Body of pancreas (tissue), 4 donors: ENCODE measurements at regions of chr6 and their contacts with region 1.

Region 1: GRCh38 chr6:152642989-152643388 is 5.8 kb upstream of the SYNE1 start:
- DNase-seq: peak; percentile 48 to 67 (median 63)
- ATAC-seq: peak; percentile 59
- H3K4me3 ChIP-seq: no peak overlapping the region
- H3K27ac ChIP-seq: no peak overlapping the region
- H3K4me1 ChIP-seq: no peaks in the 10 kb centered on the region
- H3K27me3 ChIP-seq: no peaks in the 10 kb centered on the region
- CTCF ChIP-seq: peak; percentile 17 to 63 (median 46)
- POLR2A ChIP-seq: no peak

Region 2: DNA sequence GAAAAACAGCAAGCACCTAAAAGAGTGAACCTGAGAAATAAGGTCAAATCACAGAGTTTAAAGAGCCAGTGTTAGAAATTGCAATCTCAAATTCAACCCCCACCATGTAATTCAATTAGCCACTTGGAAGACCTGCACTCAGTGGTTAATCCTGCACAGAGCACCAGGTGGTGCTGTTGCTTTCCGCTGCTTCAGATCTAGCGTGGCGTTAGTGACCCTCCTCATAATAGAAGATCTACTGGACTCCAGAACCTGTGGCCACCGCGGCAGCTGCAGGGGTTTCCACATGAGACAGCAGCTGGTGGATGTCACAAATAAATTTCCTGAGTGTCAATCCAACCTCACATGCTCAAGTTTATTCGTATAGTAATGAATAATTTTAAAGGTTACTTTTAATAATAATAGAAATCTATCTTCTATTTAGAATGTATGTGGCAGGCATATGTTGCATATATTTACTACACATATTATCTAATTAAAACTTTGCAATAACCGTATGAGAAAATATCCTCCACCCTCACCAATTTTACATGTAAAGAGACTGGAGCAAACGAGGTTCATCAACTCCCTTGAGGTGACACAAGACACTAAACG is 90.3 kb before region 1 on chr6:
- intact Hi-C with region 1: loop called (anchors 5 kb)
- DNase-seq: peak; percentile 59 to 69 (median 66)
- ATAC-seq: peak; percentile 82
- H3K4me3 ChIP-seq: no peak overlapping the region
- H3K27ac ChIP-seq: no peak overlapping the region
- H3K4me1 ChIP-seq: no peaks in the 10 kb centered on the region
- H3K27me3 ChIP-seq: no peaks in the 10 kb centered on the region
- CTCF ChIP-seq: peak; percentile 48 to 77 (median 74)
- POLR2A ChIP-seq: no peak